ENCODE measurements at regions of chr9 and their contacts with region 1.

Region 1: DNA sequence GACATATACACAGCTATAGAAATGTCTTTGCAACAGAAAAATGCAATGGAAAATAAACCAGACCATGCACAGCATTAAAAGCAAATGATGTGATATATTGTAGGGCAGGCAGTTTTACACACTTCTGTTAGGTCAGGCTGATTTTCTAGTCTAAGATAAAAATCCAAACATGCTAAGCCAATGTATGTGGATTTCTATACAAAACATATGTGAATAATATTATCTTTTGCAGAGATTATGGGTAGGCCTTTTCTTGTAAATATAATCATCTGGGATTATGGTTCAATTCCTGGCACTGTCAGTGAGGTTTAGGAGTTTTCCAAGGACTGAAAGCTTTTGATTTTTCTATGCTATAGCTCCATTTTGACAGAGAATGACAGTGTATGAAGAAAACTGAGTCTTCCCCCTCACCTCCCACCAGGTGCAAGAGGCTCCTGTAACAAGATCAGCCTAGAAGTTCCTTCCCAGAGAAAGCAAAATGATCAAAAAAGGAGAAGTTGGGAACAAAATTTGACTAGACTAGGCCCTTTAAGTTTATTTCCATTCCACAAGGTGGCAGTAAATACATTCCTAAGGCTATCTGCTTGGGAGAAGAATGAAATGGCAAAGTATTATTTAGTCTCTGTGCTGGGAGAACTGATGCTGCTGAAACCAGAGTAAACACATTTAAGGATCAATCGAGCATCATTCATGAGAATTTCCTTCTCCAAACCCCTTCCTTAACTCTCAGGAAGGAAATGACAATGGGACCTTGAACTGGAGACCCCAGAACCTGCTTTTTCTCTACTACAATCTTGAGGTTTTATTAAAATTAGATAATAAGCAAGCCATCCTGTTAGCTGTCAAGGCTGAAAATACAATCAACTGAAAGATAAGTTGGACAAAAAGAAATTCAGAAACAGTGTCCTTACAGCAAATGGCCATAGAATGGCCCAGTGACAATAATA is 133.0 kb upstream of the TUT7 start:
- DNase-seq: peak; percentile 76
- ATAC-seq: peak; percentile 85
- H3K4me3 ChIP-seq: no peak overlapping the region
- H3K27ac ChIP-seq: no peak overlapping the region
- H3K4me1 ChIP-seq: peaks cover 5% of the 10 kb centered on the region; the same call in 1 of the 2 replicates
- H3K27me3 ChIP-seq: no peaks in the 10 kb centered on the region
- CTCF ChIP-seq: peak; percentile 90
- POLR2A ChIP-seq: peak; percentile 36; the same call in 1 of the 2 replicates
- RAD21 ChIP-seq: peak; percentile 98

Region 2: DNA sequence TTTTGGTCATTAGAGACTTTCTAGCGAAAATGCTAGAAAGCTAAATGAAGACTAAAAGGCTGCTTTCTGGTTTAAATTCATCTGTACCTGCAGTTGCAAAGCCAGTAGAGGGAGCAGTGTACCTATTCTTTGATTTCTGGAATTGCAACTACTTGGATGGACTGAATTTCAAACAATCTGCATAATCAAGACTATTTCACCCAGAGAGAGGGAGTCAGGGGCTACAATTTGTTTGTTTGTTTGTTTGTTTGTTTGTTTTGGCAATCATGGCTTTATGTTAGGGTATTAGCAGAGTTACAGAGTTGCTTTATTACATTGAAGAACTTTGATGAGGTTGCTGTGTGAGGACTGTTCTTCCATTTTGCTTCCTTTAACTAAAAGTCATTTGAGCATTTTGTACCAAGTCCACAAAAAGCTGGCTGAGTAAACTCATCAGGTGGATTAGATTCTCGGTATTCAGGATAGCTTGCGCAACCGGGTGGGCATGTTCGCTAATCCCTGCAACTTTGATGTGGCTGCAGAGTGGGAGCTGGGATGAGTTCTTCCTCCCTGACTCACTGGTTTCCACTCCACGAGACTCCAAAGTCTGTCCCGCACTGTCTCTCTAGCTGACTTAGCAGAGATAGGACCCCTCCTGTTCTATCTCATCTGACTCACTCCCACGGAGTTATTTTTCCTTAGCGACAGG is 53.0 kb before region 1 on chr9:
- CTCF ChIA-PET with region 1: interaction called, 11 read pairs
- POLR2A ChIA-PET with region 1: no interaction called
- dilution Hi-C with region 1: no loop called
- in situ Hi-C with region 1: no loop called
- intact Hi-C with region 1: loop called (anchors 1 kb)
- DNase-seq: peak; percentile 79
- ATAC-seq: peak; percentile 93
- H3K4me3 ChIP-seq: no peak overlapping the region; the same call in 1 of the 2 replicates
- H3K27ac ChIP-seq: peak overlapping the region; percentile 21; the same call in 1 of the 2 replicates
- H3K4me1 ChIP-seq: no peaks in the 10 kb centered on the region
- H3K27me3 ChIP-seq: no peaks in the 10 kb centered on the region
- CTCF ChIP-seq: peak; percentile 89
- POLR2A ChIP-seq: no peak
- RAD21 ChIP-seq: peak; percentile 84

Region 3: DNA sequence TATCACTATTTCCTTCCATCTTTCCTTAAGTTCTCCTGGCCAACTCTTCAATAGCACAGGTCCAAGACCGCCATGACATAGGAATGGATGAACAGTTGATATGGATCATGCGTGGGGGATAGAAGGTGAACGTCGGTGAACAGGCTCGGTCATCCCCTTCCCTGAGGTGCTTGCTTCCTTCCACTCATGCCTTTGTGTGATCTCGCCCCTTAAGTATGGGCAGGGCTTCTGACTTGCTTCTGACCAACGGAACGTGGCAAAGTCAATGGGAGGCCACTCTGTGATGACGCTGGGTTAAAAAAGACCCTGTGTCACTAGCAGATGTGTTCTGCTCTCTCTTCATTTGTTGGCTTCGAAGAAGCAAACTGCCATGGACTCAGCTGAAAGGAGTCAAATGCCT is 107.5 kb after region 1 on chr9:
- CTCF ChIA-PET with region 1: no interaction called
- POLR2A ChIA-PET with region 1: no interaction called
- dilution Hi-C with region 1: no loop called
- in situ Hi-C with region 1: no loop called
- intact Hi-C with region 1: no loop called
- DNase-seq: no peak
- ATAC-seq: no peak
- H3K4me3 ChIP-seq: no peak overlapping the region
- H3K27ac ChIP-seq: no peak overlapping the region
- H3K4me1 ChIP-seq: peaks cover 3% of the 10 kb centered on the region; the same call in 1 of the 2 replicates
- H3K27me3 ChIP-seq: no peaks in the 10 kb centered on the region
- CTCF ChIP-seq: no peak
- POLR2A ChIP-seq: no peak
- RAD21 ChIP-seq: no peak

Region 4: DNA sequence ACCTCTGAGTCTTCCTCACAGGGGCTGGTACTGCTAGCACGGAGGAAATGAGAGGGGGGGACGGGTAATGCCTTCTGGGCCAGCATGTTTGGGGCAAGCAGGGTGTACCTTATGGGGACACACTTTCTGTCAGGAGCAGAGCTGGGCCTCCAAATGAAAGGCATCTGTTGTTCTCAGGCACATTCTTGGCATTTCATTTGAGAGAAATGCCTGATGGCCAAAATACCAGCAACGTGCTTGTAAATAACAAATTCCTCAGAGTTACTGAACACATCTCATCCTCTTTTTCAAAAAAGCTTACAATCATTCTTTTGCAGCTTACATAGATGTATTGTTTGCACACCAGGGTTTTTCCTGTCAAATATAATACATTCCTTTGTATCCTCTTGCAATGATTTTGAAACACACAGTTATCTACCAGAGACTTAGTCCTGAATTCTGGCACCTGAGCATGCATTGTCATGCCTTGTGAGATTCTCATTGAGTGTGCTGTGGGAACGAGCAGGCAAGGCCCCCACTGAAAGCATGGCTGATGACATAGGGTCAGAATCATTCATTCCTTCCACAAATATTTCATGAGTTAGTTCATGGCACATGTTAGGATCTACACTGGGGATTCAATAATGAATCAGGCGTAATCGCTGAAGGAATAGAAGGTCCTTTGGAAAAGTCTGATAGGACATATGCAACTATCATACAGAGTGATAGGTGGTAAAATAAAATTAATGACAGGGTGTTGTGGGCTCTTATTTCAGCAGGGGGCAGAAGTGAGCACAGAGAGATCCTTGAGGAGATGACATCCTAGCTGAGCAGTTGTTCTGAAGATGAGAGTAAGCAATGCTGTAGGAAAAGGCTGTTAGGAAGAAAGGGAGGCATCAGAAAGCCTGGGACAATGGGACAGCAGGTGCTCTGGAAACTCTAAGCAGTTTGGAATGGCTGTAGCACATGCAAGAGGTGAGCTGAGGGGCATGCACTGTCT is 128.0 kb after region 1 on chr9:
- CTCF ChIA-PET with region 1: interaction called, 3 read pairs
- POLR2A ChIA-PET with region 1: no interaction called
- dilution Hi-C with region 1: no loop called
- in situ Hi-C with region 1: no loop called
- intact Hi-C with region 1: loop called (anchors 2 kb)
- DNase-seq: peak; percentile 70
- ATAC-seq: peak; percentile 74
- H3K4me3 ChIP-seq: no peak overlapping the region
- H3K27ac ChIP-seq: peak overlapping the region; percentile 80; the same call in 1 of the 2 replicates
- H3K4me1 ChIP-seq: peaks cover 8% of the 10 kb centered on the region
- H3K27me3 ChIP-seq: no peaks in the 10 kb centered on the region
- CTCF ChIP-seq: peak; percentile 46
- POLR2A ChIP-seq: no peak
- RAD21 ChIP-seq: peak; percentile 50

Region 5: GRCh38 chr9:86637515-86637914 is 150.4 kb after region 1 on chr9:
- CTCF ChIA-PET with region 1: interaction called, 3 read pairs
- POLR2A ChIA-PET with region 1: no interaction called
- dilution Hi-C with region 1: no loop called
- in situ Hi-C with region 1: no loop called
- intact Hi-C with region 1: loop called (anchors 1 kb)
- DNase-seq: peak; percentile 39
- ATAC-seq: peak; percentile 62
- H3K4me3 ChIP-seq: no peak overlapping the region
- H3K27ac ChIP-seq: no peak overlapping the region
- H3K4me1 ChIP-seq: no peaks in the 10 kb centered on the region; the same call in 1 of the 2 replicates
- H3K27me3 ChIP-seq: 0 out of 2 replicates have a peak, but pooled peaks cover 2% of the 10 kb centered on the region
- CTCF ChIP-seq: peak; percentile 62
- POLR2A ChIP-seq: no peak
- RAD21 ChIP-seq: peak; percentile 83

Region 6: DNA sequence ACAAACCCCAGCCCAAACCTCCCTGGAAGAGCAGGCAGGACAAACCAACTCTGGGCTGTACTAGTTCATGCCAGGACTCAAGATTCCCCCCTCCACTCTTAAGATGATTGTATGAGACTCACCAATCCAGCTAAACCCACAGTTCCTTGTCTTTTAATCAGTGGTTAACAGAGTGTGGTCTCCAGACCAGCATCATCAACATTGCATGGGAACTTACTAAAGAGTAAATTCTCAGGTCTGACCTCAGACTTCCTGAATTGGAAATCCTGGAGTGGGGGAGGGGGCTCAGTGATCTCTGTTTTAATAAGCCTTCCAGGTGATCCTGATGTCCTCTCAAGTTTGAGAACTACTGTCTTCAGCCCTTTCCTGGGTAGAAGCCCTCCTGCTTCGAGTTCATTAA is 219.3 kb after region 1 on chr9:
- CTCF ChIA-PET with region 1: no interaction called
- POLR2A ChIA-PET with region 1: no interaction called
- dilution Hi-C with region 1: no loop called
- in situ Hi-C with region 1: no loop called
- intact Hi-C with region 1: loop called (anchors 5 kb)
- DNase-seq: peak; percentile 62
- ATAC-seq: no peak
- H3K4me3 ChIP-seq: no peak overlapping the region
- H3K27ac ChIP-seq: no peak overlapping the region
- H3K4me1 ChIP-seq: peaks cover 5% of the 10 kb centered on the region
- H3K27me3 ChIP-seq: no peaks in the 10 kb centered on the region
- CTCF ChIP-seq: no peak
- POLR2A ChIP-seq: no peak
- RAD21 ChIP-seq: no peak

Region 7: GRCh38 chr9:86795823-86796553 is 308.8 kb after region 1 on chr9:
- CTCF ChIA-PET with region 1: no interaction called
- POLR2A ChIA-PET with region 1: no interaction called
- dilution Hi-C with region 1: no loop called
- in situ Hi-C with region 1: no loop called
- intact Hi-C with region 1: loop called (anchors 2 kb)
- DNase-seq: peak; percentile 83
- ATAC-seq: peak; percentile 83
- H3K4me3 ChIP-seq: no peak overlapping the region
- H3K27ac ChIP-seq: peak overlapping the region; percentile 16; the same call in 1 of the 2 replicates
- H3K4me1 ChIP-seq: peaks cover 9% of the 10 kb centered on the region
- H3K27me3 ChIP-seq: no peaks in the 10 kb centered on the region
- CTCF ChIP-seq: peak; percentile 24; the same call in 1 of the 2 replicates
- POLR2A ChIP-seq: no peak
- RAD21 ChIP-seq: 0 out of 2 replicates have a peak, but pooled peaks have one; percentile 19

Region 8: DNA sequence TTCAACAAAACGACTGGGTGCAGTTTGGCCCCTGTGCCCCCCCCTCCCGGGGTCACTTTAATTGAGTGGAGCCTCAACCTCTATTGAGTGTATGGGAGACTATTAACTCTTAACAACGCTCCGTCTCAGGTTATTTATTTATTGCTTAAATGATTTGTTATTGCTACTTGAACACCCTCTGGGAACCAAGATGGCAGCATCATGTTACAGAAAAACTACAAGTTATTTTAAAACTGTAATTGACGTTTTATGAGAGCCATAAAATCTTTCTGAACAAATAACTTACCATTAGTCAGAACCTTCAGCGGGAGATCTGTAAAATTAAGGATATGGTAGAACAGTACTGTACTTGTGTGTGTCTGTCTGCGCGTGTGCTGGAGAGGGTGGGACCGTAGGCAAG is 389.6 kb after region 1 on chr9:
- CTCF ChIA-PET with region 1: no interaction called
- POLR2A ChIA-PET with region 1: no interaction called
- dilution Hi-C with region 1: no loop called
- in situ Hi-C with region 1: no loop called
- intact Hi-C with region 1: no loop called
- DNase-seq: no peak
- ATAC-seq: no peak
- H3K4me3 ChIP-seq: no peak overlapping the region
- H3K27ac ChIP-seq: no peak overlapping the region
- H3K4me1 ChIP-seq: no peaks in the 10 kb centered on the region
- H3K27me3 ChIP-seq: peaks cover 4% of the 10 kb centered on the region; the same call in 1 of the 2 replicates
- CTCF ChIP-seq: no peak
- POLR2A ChIP-seq: no peak
- RAD21 ChIP-seq: no peak

Region 9: GRCh38 chr9:87662808-87663528 is 1175.8 kb after region 1 on chr9:
- CTCF ChIA-PET with region 1: no interaction called
- POLR2A ChIA-PET with region 1: no interaction called
- dilution Hi-C with region 1: no loop called
- in situ Hi-C with region 1: no loop called
- intact Hi-C with region 1: loop called (anchors 5 kb)
- DNase-seq: peak; percentile 44
- ATAC-seq: peak; percentile 91
- H3K4me3 ChIP-seq: no peak overlapping the region
- H3K27ac ChIP-seq: no peak overlapping the region
- H3K4me1 ChIP-seq: no peaks in the 10 kb centered on the region
- H3K27me3 ChIP-seq: no peaks in the 10 kb centered on the region; the same call in 1 of the 2 replicates
- CTCF ChIP-seq: peak; percentile 77
- POLR2A ChIP-seq: no peak
- RAD21 ChIP-seq: peak; percentile 85

Measured in IMR-90 (cell line).